GM12878 (cell line): ENCODE measurements at regions of chr6 and their contacts with region 1.

Region 1: DNA sequence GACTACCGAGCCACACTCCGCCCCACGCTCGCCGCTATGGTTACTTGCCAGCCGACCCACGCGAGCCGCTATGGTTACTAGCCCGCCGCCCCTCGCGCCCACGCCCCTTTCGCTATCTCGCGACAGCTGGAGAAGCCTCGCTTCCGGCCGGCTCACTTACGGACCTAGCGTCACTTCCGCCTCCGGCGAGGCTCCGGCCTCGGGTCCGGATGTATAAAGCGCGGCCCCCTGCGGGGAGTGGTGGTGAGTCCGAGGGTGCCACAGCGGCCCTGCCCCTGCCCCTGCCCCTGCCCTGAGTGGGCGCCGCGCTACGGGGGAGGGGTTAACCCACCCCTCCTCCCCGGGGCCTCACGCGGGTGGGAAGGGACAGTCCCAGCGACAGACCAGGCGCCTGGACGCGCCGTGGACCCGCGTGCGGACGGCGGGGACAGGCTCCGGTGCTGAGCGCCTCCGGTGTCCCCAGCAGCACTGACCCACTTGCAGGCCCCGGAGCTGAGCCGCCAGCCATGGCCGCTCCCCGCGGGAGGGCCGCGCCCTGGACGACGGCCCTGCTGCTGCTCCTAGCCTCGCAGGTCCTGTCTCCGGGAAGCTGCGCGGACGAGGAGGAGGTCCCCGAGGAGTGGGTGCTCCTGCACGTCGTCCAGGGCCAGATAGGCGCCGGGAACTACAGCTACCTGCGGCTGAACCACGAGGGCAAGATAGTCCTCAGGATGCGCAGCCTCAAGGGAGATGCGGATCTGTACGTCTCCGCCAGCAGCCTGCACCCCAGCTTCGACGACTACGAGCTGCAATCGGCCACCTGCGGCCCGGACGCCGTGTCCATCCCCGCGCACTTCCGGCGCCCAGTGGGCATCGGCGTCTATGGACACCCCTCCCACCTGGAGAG is at the starts of genes C6orf120 and WDR27:
- DNase-seq: peak; percentile 83
- ATAC-seq: peak; percentile 96
- H3K4me3 ChIP-seq: peak within 1 kb of the TSS; percentile 99
- H3K27ac ChIP-seq: peak within 1 kb of the TSS; percentile 78
- H3K4me1 ChIP-seq: peaks cover 7% of the 10 kb centered on the region
- H3K27me3 ChIP-seq: no peaks in the 10 kb centered on the region
- CTCF ChIP-seq: peak in 2 of 3 experiments; percentile 14 to 18; a peak in 1 of 6 replicates
- EP300 ChIP-seq: no peak
- POLR2A ChIP-seq: peak; percentile 98
- RAD21 ChIP-seq: no peak; the same call in 1 of the 2 replicates
- polyA plus RNA-seq, gene C6orf120: 3.6 to 6.2 TPM
- polyA plus RNA-seq, gene WDR27: 1.9 to 3.8 TPM

Region 2: GRCh38 chr6:169751242-169752073 is 49.3 kb after region 1 on chr6 and contains the starts of genes DYNLT2 and ERMARD:
- CTCF ChIA-PET with region 1: no interaction called
- POLR2A ChIA-PET with region 1: interaction called, 5 read pairs
- RAD21 ChIA-PET with region 1: interaction called, 4 read pairs
- SMC1A ChIA-PET with region 1: interaction called, 5 read pairs
- in situ Hi-C with region 1: no loop called
- intact Hi-C with region 1: loop called (anchors 1 kb)
- DNase-seq: peak; percentile 69
- ATAC-seq: peak; percentile 96
- H3K4me3 ChIP-seq: peak within 1 kb of the TSS; percentile 97
- H3K27ac ChIP-seq: peak within 1 kb of the TSS; percentile 91
- H3K4me1 ChIP-seq: peaks cover 5% of the 10 kb centered on the region; the same call in 1 of the 2 replicates
- H3K27me3 ChIP-seq: no peaks in the 10 kb centered on the region
- CTCF ChIP-seq: no peak
- EP300 ChIP-seq: peak in 1 of 2 experiments; percentile 27; a peak in 1 of 4 replicates
- POLR2A ChIP-seq: peak; percentile 99
- RAD21 ChIP-seq: no peak
- polyA plus RNA-seq, gene DYNLT2: 2.2 to 3.0 TPM
- polyA plus RNA-seq, gene ERMARD: 43.7 to 63.3 TPM

Region 3: GRCh38 chr6:170313716-170314295 is 611.6 kb after region 1 on chr6:
- CTCF ChIA-PET with region 1: no interaction called
- POLR2A ChIA-PET with region 1: no interaction called
- RAD21 ChIA-PET with region 1: no interaction called
- SMC1A ChIA-PET with region 1: no interaction called
- in situ Hi-C with region 1: no loop called
- intact Hi-C with region 1: loop called (anchors 5 kb)
- DNase-seq: no peak
- ATAC-seq: no peak
- H3K4me3 ChIP-seq: no peak overlapping the region
- H3K27ac ChIP-seq: no peak overlapping the region
- H3K4me1 ChIP-seq: no peaks in the 10 kb centered on the region
- H3K27me3 ChIP-seq: no peaks in the 10 kb centered on the region
- CTCF ChIP-seq: no peak
- EP300 ChIP-seq: no peak
- POLR2A ChIP-seq: no peak
- RAD21 ChIP-seq: no peak